K562 (cell line): ENCODE measurements at regions of chr12 and their contacts with region 1.

Region 1: GRCh38 chr12:115946867-115947696 is 330.4 kb downstream of the MED13L start:
- DNase-seq: peak; percentile 34 to 56 (median 48)
- ATAC-seq: peak; percentile 38; the same call in 2 of the 3 replicates
- H3K4me3 ChIP-seq: no peak overlapping the region
- H3K27ac ChIP-seq: no peak overlapping the region
- H3K4me1 ChIP-seq: no peaks in the 10 kb centered on the region; a peak in 1 of 5 replicates
- H3K27me3 ChIP-seq: no peaks in the 10 kb centered on the region
- CTCF ChIP-seq: peak; percentile 63 to 84 (median 76)
- EP300 ChIP-seq: no peak
- POLR2A ChIP-seq: no peak
- RAD21 ChIP-seq: peak; percentile 38 to 75

Region 2: DNA sequence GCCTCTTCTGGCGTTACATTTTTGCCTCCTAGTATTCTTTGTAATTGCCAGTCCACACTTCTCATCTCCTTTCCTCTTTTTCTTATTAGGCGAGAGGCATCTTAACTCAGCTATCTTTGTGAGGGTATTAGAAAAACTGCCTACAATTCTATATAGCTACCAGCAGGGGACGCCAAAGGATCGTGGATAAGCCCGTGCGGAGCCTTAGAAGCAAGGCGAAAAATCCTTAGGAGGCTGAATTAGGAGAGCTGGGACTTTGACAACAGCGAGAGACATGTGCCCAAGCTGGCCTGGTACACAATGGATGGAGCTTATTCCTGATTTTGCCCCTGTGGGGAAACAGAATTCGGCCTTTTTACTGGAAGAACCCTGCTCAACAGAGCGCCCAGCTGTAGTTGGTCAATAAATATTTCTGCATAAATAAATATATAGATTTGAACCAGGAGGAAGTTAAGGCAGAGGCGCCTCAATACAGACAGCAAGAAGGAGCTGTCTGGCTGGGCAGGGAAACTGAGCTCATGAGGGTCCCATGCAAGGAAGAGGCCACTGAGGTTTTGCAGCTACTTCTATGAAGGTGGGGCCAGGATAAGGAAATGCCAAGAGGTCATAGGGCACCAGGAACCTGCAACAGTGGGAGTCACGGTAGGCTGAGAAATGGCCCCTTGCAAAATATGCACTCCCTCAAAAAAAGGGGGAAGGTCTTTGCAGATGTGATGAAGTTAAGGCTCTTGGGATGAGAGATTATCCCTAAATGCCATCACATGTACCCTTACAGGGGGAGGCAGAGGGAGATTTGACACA is 1966.3 kb before region 1 on chr12:
- CTCF ChIA-PET with region 1: no interaction called
- POLR2A ChIA-PET with region 1: no interaction called
- in situ Hi-C with region 1: loop called (anchors 25 kb)
- intact Hi-C with region 1: no loop called
- DNase-seq: peak; percentile 62 to 79 (median 66)
- ATAC-seq: peak; percentile 89
- H3K4me3 ChIP-seq: no peak overlapping the region
- H3K27ac ChIP-seq: no peak overlapping the region
- H3K4me1 ChIP-seq: no peaks in the 10 kb centered on the region
- H3K27me3 ChIP-seq: no peaks in the 10 kb centered on the region; a peak in 1 of 5 replicates
- CTCF ChIP-seq: peak; percentile 87 to 98 (median 94)
- EP300 ChIP-seq: no peak
- POLR2A ChIP-seq: no peak
- RAD21 ChIP-seq: peak; percentile 85 to 94

Region 3: GRCh38 chr12:114662512-114663177 is 1284.4 kb before region 1 on chr12:
- CTCF ChIA-PET with region 1: no interaction called
- POLR2A ChIA-PET with region 1: no interaction called
- in situ Hi-C with region 1: no loop called
- intact Hi-C with region 1: loop called (anchors 10 kb)
- DNase-seq: peak; percentile 57 to 69 (median 68)
- ATAC-seq: peak; percentile 75
- H3K4me3 ChIP-seq: no peak overlapping the region
- H3K27ac ChIP-seq: no peak overlapping the region
- H3K4me1 ChIP-seq: peaks cover 0 to 8% of the 10 kb centered on the region in 2 experiments; a peak in 2 of 5 replicates
- H3K27me3 ChIP-seq: peaks cover 15 to 19% of the 10 kb centered on the region in 2 experiments; a peak in 3 of 5 replicates
- CTCF ChIP-seq: peak; percentile 79 to 88 (median 85)
- EP300 ChIP-seq: no peak
- POLR2A ChIP-seq: no peak
- RAD21 ChIP-seq: peak; percentile 81 to 89

Region 4: DNA sequence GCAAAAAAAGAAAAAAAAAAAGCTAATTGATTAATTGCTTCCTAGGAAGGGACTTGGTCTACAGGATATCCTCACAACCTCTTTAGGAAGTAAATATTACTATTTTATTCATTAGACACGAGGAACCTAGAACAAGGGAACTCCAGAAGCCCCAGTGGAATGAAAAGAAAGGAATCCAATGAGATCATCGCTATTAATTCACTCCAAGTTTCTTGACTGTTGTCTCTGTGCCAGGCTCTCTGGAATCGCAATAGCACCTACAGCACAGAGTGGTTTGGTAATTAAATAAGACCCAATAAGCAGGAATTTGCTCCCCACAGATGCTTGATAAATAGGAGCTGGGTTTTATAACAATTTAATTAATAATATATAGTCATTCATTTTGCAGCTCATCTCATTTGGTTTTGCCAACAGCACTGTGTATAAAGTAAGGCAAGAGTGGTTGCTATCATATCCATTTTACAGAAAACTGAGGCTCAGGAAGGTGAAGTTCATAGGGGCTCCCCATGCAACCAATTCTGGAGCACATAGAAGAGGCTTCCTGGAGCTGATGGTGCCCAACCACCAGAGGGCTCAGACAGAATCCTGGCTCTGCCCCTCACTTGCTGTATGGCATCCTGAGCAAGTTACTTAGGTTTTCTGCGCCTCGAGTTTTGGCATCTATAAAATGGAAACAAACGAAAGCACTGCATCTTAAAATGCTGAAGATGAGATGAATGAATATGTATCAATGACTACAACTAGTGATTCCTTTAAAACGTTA is 89.7 kb before region 1 on chr12:
- CTCF ChIA-PET with region 1: no interaction called
- POLR2A ChIA-PET with region 1: no interaction called
- in situ Hi-C with region 1: no loop called
- intact Hi-C with region 1: no loop called
- DNase-seq: no peak
- ATAC-seq: no peak
- H3K4me3 ChIP-seq: no peak overlapping the region
- H3K27ac ChIP-seq: no peak overlapping the region
- H3K4me1 ChIP-seq: no peaks in the 10 kb centered on the region; a peak in 1 of 5 replicates
- H3K27me3 ChIP-seq: peaks cover 13 to 15% of the 10 kb centered on the region in 2 experiments; a peak in 3 of 5 replicates
- CTCF ChIP-seq: no peak
- EP300 ChIP-seq: no peak
- POLR2A ChIP-seq: no peak
- RAD21 ChIP-seq: no peak

Region 5: GRCh38 chr12:115922952-115923564 is 24.0 kb before region 1 on chr12:
- CTCF ChIA-PET with region 1: no interaction called
- POLR2A ChIA-PET with region 1: no interaction called
- in situ Hi-C with region 1: no loop called
- intact Hi-C with region 1: loop called (anchors 1 kb)
- DNase-seq: peak in 2 of 4 experiments; percentile 33 to 49
- ATAC-seq: peak; percentile 78
- H3K4me3 ChIP-seq: no peak overlapping the region
- H3K27ac ChIP-seq: no peak overlapping the region
- H3K4me1 ChIP-seq: no peaks in the 10 kb centered on the region
- H3K27me3 ChIP-seq: peaks cover 8 to 27% of the 10 kb centered on the region in 2 experiments; a peak in 3 of 5 replicates
- CTCF ChIP-seq: peak; percentile 50 to 67 (median 64); a peak in 4 of 6 replicates
- EP300 ChIP-seq: no peak
- POLR2A ChIP-seq: no peak
- RAD21 ChIP-seq: peak; percentile 24 to 65; a peak in 2 of 4 replicates

Region 6: GRCh38 chr12:116697305-116697704 is 750.2 kb after region 1 on chr12:
- CTCF ChIA-PET with region 1: no interaction called
- POLR2A ChIA-PET with region 1: no interaction called
- in situ Hi-C with region 1: no loop called
- intact Hi-C with region 1: loop called (anchors 5 kb)
- DNase-seq: peak; percentile 48 to 73 (median 60)
- ATAC-seq: peak; percentile 97
- H3K4me3 ChIP-seq: no peak overlapping the region
- H3K27ac ChIP-seq: no peak overlapping the region
- H3K4me1 ChIP-seq: peaks cover 0 to 7% of the 10 kb centered on the region in 2 experiments; a peak in 1 of 5 replicates
- H3K27me3 ChIP-seq: peaks cover 35 to 44% of the 10 kb centered on the region in 2 experiments
- CTCF ChIP-seq: peak; percentile 71 to 80 (median 77)
- EP300 ChIP-seq: no peak
- POLR2A ChIP-seq: no peak
- RAD21 ChIP-seq: peak; percentile 63 to 81